Ovary (tissue), 10 donors: ENCODE measurements at regions of chr1 and their contacts with region 1.

Region 1: GRCh38 chr1:224329842-224330753 is at the start of gene NVL:
- DNase-seq: peak; percentile 78 to 88 (median 81)
- H3K4me3 ChIP-seq: peak within 1 kb of the TSS; percentile 83
- H3K27ac ChIP-seq: peak within 1 kb of the TSS; percentile 71 to 90
- H3K4me1 ChIP-seq: peaks cover 5% of the 10 kb centered on the region
- H3K27me3 ChIP-seq: no peaks in the 10 kb centered on the region
- CTCF ChIP-seq: peak in 1 of 3 donors; percentile 39
- EP300 ChIP-seq: no peak
- POLR2A ChIP-seq: no peak
- total RNA-seq, gene NVL: 19.0 to 31.9 (median 23.4) TPM

Region 2: GRCh38 chr1:224113918-224114786 is 215.9 kb before region 1 on chr1 and contains the start of gene FBXO28:
- intact Hi-C with region 1: loop called in 2 of 4 experiments (anchors 2 to 10 kb)
- DNase-seq: peak; percentile 94 to 96 (median 95)
- H3K4me3 ChIP-seq: peak within 1 kb of the TSS; percentile 98
- H3K27ac ChIP-seq: peak within 1 kb of the TSS; percentile 83 to 92
- H3K4me1 ChIP-seq: peaks cover 1% of the 10 kb centered on the region
- H3K27me3 ChIP-seq: no peaks in the 10 kb centered on the region
- CTCF ChIP-seq: no peak
- EP300 ChIP-seq: no peak
- POLR2A ChIP-seq: peak; percentile 91
- total RNA-seq, gene FBXO28: 18.2 to 31.7 (median 27.0) TPM

Region 3: DNA sequence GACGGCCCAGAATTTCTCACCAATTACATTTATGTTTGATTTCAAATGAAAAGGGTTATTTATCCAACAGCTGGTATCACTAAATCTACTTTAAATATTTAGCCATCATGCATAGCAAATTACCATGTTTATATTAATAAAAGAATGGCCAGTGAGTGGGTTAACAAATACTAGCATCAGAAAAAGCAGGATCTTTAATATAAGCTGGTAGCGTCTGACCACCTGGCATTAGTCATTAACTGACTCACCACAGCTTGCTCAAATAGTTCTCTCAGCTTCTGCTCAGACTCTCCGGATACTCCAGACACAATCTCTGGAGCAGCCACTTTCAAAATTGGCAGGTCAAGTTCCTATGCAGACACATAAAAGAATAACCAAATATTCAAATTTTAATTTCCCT is 29.8 kb before region 1 on chr1:
- intact Hi-C with region 1: no loop called
- DNase-seq: no peak
- H3K4me3 ChIP-seq: no peak overlapping the region
- H3K27ac ChIP-seq: no peak overlapping the region
- H3K4me1 ChIP-seq: no peaks in the 10 kb centered on the region
- H3K27me3 ChIP-seq: no peaks in the 10 kb centered on the region
- CTCF ChIP-seq: no peak
- EP300 ChIP-seq: no peak
- POLR2A ChIP-seq: no peak

Region 4: DNA sequence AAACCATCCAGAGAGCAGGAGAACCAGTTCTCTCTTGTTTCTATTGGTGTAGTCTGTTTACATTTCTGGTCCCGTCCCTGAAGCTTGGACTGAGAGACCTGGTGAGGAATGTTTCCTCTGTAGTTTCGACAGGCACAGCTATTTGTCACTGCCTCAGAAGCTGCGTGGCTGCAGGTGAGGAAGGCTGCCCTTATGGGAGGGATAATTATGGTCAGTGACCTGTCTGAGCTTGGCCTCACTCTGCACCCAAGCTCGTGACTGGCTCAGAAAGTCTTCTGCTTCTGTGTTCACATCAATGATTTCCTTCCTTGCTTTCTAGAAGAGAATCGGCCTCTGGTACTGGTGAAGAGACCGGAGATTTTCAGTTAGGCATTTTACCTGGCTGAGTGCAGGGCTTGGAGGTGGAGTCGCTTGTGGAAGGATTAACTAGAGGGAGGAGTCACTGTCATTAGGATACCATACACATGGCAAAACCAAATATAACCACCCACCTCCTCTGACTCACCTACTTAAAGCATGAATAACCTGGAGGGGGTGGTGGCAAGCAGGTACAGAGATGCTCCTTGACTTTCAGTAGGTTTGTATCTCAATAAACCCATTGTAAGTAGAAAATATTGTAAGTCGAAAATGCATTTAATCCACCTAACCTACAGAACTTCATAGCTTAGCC is 124.4 kb after region 1 on chr1:
- intact Hi-C with region 1: loop called in 1 of 4 experiments (anchors 10 kb)
- DNase-seq: no peak
- H3K4me3 ChIP-seq: no peak overlapping the region
- H3K27ac ChIP-seq: no peak overlapping the region
- H3K4me1 ChIP-seq: peaks cover 9% of the 10 kb centered on the region
- H3K27me3 ChIP-seq: no peaks in the 10 kb centered on the region
- CTCF ChIP-seq: no peak
- EP300 ChIP-seq: no peak
- POLR2A ChIP-seq: no peak

Region 5: GRCh38 chr1:224521904-224522734 is 192.0 kb after region 1 on chr1:
- intact Hi-C with region 1: no loop called
- DNase-seq: no peak
- H3K4me3 ChIP-seq: no peak overlapping the region
- H3K27ac ChIP-seq: no peak overlapping the region
- H3K4me1 ChIP-seq: no peaks in the 10 kb centered on the region
- H3K27me3 ChIP-seq: no peaks in the 10 kb centered on the region
- CTCF ChIP-seq: no peak
- EP300 ChIP-seq: no peak
- POLR2A ChIP-seq: no peak